Mammary epithelial cell (primary cell): ENCODE measurements at regions of chr11 and their contacts with region 1.

Region 1: GRCh38 chr11:128208329-128209137 is 378.8 kb downstream of the ETS1 start:
- DNase-seq: peak; percentile 94
- H3K4me3 ChIP-seq: peak overlapping the region in 1 of 3 experiments; percentile 1
- H3K27ac ChIP-seq: peak overlapping the region; percentile 94
- H3K4me1 ChIP-seq: peaks cover 57% of the 10 kb centered on the region
- H3K27me3 ChIP-seq: no peaks in the 10 kb centered on the region
- CTCF ChIP-seq: no peak

Region 2: GRCh38 chr11:128180446-128181087 is 28.0 kb before region 1 on chr11:
- CTCF ChIA-PET with region 1: no interaction called
- dilution Hi-C with region 1: no loop called
- in situ Hi-C with region 1: no loop called
- intact Hi-C with region 1: loop called (anchors 1 kb)
- DNase-seq: peak; percentile 89
- H3K4me3 ChIP-seq: no peak overlapping the region
- H3K27ac ChIP-seq: peak overlapping the region; percentile 45
- H3K4me1 ChIP-seq: peaks cover 22% of the 10 kb centered on the region
- H3K27me3 ChIP-seq: no peaks in the 10 kb centered on the region
- CTCF ChIP-seq: no peak

Region 3: GRCh38 chr11:128251140-128251539 is 42.6 kb after region 1 on chr11:
- CTCF ChIA-PET with region 1: no interaction called
- dilution Hi-C with region 1: no loop called
- in situ Hi-C with region 1: no loop called
- intact Hi-C with region 1: loop called (anchors 2 kb)
- DNase-seq: peak; percentile 57
- H3K4me3 ChIP-seq: no peak overlapping the region
- H3K27ac ChIP-seq: peak overlapping the region; percentile 7
- H3K4me1 ChIP-seq: peaks cover 14% of the 10 kb centered on the region
- H3K27me3 ChIP-seq: no peaks in the 10 kb centered on the region
- CTCF ChIP-seq: no peak

Region 4: GRCh38 chr11:128506999-128507611 is 298.6 kb after region 1 on chr11:
- CTCF ChIA-PET with region 1: no interaction called
- dilution Hi-C with region 1: no loop called
- in situ Hi-C with region 1: no loop called
- intact Hi-C with region 1: loop called (anchors 5 kb)
- DNase-seq: peak; percentile 90
- H3K4me3 ChIP-seq: peak overlapping the region; percentile 27 to 41 (median 32)
- H3K27ac ChIP-seq: peak overlapping the region; percentile 88
- H3K4me1 ChIP-seq: peaks cover 80% of the 10 kb centered on the region
- H3K27me3 ChIP-seq: no peaks in the 10 kb centered on the region
- CTCF ChIP-seq: no peak